ENCODE measurements at regions of chr14 and their contacts with region 1.

Region 1: DNA sequence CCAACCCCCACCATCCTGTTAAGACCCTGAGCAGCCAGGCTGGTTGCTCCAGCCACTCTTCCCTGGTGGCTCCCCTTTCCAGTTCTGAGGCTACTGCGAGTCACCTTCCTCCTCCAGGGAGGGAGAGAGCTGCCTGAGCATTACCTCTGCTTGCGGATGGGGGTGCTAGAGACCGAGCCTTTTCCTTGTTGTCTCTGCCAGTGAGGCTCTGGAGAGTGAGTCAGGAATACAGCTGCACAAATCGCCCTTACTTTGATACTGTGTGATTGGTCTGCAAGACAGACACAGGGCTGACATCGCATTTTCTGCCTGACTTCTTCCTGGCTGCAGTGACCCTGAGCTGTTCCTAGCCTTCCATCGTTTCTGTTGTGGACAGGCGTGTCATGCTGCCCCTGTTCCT is 94.3 kb downstream of the SLC25A47 start:
- DNase-seq: peak; percentile 87 to 95 (median 92)
- H3K4me3 ChIP-seq: no peak overlapping the region
- H3K27ac ChIP-seq: peak overlapping the region; percentile 9 to 84 (median 66)
- H3K4me1 ChIP-seq: peaks cover 3 to 7% of the 10 kb centered on the region in 2 donors
- H3K27me3 ChIP-seq: no peaks in the 10 kb centered on the region
- CTCF ChIP-seq: peak; percentile 64 to 94 (median 92)
- POLR2A ChIP-seq: peak in 1 of 2 donors; percentile 62

Region 2: DNA sequence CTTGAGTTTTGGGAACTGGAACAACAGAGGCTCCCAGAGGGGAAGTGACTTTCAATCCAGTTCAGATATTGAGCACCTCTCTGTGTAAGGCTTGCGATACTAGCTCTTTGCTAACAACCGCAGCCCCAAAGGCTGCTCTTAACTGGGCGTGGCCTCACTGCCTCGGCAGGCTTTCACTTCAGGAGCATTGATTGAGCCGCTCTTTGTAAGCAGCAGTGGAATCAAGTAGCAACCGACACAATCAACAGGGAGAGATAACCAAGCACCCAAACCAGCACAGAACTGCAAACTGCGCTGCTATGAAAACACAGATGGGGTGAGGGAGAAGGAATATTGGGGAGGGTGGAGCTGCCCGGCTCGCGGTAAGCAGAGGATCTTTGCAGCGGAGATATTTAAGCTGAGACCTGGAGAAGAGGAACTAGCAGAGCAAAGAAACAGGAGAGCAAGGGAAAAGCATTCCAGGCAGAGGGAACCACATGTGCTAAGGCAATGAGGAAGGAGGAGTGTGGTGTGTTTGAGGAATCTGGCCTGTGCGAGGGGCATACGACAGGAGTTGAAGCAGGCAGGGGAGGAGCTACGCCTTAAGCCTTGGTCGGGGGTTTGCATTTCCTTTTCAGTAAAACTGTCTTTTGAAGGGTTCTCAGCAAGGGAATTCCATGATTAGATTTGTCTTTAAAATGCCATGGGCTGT is 195.8 kb before region 1 on chr14:
- intact Hi-C with region 1: no loop called
- DNase-seq: peak in 6 of 7 donors; percentile 41 to 83 (median 64)
- H3K4me3 ChIP-seq: peak overlapping the region in 2 of 4 donors; percentile 46
- H3K27ac ChIP-seq: peak overlapping the region in 4 of 5 donors; percentile 3 to 64 (median 44)
- H3K4me1 ChIP-seq: peaks cover 14 to 31% of the 10 kb centered on the region in 2 donors
- H3K27me3 ChIP-seq: no peaks in the 10 kb centered on the region
- CTCF ChIP-seq: no peak
- POLR2A ChIP-seq: peak in 1 of 2 donors; percentile 46

Region 3: DNA sequence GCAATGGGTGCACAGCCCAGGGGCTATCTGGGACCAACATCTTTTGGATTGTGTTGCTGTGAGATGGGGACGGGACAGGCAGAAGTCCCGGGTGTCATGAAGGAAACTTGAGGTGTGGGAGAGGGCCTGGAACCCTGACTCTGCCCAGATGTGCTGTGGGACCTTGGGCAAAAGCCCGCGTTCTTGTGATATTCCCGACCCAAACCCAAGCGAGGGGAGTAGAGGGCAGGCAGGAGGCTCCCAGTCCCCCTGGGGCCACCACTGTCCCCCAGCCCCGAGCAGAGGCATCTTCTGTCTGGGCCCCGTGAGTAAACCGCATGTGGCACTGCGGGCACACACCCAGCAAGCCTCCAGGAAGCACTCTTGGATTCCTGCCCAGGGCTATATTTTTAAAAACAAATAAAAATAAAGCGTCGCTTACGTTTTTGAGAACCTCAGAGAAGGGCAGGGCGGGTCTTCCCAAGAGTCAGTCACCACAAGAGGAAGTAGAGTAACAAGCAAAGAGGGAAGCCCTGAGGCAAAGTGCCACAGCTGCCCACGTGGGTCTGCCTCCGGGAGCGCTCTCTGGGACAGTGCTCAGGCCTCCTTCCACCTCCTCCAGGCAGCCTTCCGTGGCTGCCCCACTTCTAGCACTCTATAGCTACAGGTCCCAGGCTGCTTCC is 130.3 kb after region 1 on chr14:
- intact Hi-C with region 1: loop called in 1 of 2 experiments (anchors 10 kb)
- DNase-seq: peak; percentile 54 to 85 (median 72)
- H3K4me3 ChIP-seq: no peak overlapping the region
- H3K27ac ChIP-seq: peak overlapping the region in 2 of 5 donors; percentile 71 to 86
- H3K4me1 ChIP-seq: peaks cover 0 to 14% of the 10 kb centered on the region in 2 donors
- H3K27me3 ChIP-seq: no peaks in the 10 kb centered on the region
- CTCF ChIP-seq: no peak
- POLR2A ChIP-seq: no peak

Region 4: GRCh38 chr14:100654814-100655740 is 237.6 kb after region 1 on chr14:
- intact Hi-C with region 1: loop called in 1 of 2 experiments (anchors 10 kb)
- DNase-seq: peak in 4 of 7 donors; percentile 60 to 69 (median 66)
- H3K4me3 ChIP-seq: no peak overlapping the region
- H3K27ac ChIP-seq: no peak overlapping the region
- H3K4me1 ChIP-seq: peaks cover 2 to 5% of the 10 kb centered on the region in 2 donors
- H3K27me3 ChIP-seq: no peaks in the 10 kb centered on the region
- CTCF ChIP-seq: peak; percentile 54 to 87 (median 66)
- POLR2A ChIP-seq: no peak

Region 5: DNA sequence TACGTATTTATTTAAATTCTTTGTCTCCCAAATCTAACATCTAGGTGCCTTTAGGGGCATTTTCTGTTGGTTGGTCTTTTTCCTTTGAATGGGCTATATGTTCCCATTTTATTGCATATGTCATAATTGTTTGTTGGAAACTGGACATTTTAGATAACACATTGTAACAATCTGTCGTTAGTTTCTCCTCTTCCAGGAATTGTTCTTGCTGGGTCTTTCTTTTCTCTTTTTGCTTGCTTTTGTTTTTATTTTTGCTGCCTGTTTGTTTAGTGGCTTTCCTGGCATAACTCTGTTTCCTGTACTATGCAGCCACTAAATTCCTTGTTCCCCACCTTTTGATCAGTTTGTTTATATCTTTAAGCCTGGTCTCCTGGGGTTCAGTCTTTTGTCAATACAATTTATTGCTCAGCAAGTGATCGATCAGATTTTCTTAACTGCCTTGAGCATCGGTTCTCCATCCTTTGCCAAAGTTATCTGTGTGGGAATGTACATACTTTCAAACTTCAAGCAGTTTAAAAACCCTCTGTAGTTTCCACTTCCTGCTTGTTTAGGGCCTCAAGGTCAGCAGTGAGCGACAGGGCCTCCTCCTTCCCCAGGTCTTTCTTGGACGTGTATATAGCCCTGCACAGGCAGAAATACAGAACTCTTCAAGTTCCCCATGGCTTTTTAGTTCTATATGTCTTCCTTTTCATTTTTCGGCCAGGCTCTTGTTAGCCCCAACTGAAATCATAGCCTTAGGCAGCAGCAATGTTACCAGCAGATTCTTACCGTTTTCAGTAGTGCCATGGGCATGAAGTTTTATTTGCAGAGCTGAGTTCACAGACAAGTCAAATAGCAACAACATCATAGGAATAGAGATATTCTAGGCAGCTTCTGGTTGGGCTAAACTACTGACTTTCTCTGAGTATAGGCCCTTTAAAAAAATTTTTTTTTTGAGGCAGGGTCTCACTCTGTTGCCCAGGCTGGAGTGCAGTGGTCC is 730.7 kb after region 1 on chr14:
- intact Hi-C with region 1: no loop called
- DNase-seq: no peak
- H3K4me3 ChIP-seq: no peak overlapping the region
- H3K27ac ChIP-seq: no peak overlapping the region
- H3K4me1 ChIP-seq: no peaks in the 10 kb centered on the region
- H3K27me3 ChIP-seq: no peaks in the 10 kb centered on the region
- CTCF ChIP-seq: no peak
- POLR2A ChIP-seq: no peak